Activated naive CD4-positive, alpha-beta T cell treated with anti-CD3 and anti-CD28 coated beads, Interleukin-2, amount 10 ng/mL, durations not matched to agents 7 days and 5 days (primary cell): ENCODE measurements at regions of chr10 and their contacts with region 1.

Region 1: DNA sequence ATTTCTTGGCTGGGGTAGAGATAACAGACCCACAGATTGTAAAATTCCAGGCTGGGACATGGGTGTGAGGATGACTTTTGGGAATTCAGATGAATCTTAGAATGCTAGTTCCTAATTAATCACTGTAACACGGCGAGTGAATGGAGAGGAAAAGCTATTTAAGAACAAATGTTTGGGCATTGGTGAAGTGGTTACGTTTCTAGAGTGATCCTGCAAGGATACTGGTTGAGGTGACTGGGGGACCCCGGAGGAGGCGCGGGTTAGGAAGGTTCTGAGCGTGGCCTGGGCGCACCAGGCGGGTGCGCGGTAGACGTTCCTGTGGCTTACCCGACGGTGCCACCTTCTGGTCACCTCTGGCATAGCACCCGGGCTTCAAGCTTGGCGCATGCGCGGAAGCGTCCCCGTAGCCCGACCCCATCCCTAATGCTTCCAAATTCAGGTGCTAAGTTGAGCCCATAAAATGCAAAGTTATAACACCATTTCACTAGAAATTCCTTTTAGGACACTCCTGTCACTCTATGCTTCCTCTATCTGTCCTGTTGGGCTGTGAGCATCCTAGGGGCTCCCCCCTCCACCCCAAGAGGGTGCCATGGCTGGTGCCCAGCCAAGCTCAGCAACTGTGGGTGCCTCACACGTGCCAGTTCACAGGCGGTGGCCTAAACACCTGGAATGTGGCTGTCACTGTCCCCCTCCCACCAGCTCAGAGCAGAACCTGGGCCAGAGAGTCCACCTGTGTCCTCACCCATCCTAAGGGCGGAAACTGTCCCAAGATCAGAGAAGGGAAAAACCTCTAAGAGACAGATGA is 104.5 kb downstream of the PTPRE start:
- DNase-seq: peak; percentile 88
- H3K4me3 Mint-ChIP-seq: no peak overlapping the region
- H3K27ac Mint-ChIP-seq: peak overlapping the region; percentile 26
- H3K4me1 Mint-ChIP-seq: peaks cover 9% of the 10 kb centered on the region
- H3K27me3 Mint-ChIP-seq: peaks cover 27% of the 10 kb centered on the region

Region 2: DNA sequence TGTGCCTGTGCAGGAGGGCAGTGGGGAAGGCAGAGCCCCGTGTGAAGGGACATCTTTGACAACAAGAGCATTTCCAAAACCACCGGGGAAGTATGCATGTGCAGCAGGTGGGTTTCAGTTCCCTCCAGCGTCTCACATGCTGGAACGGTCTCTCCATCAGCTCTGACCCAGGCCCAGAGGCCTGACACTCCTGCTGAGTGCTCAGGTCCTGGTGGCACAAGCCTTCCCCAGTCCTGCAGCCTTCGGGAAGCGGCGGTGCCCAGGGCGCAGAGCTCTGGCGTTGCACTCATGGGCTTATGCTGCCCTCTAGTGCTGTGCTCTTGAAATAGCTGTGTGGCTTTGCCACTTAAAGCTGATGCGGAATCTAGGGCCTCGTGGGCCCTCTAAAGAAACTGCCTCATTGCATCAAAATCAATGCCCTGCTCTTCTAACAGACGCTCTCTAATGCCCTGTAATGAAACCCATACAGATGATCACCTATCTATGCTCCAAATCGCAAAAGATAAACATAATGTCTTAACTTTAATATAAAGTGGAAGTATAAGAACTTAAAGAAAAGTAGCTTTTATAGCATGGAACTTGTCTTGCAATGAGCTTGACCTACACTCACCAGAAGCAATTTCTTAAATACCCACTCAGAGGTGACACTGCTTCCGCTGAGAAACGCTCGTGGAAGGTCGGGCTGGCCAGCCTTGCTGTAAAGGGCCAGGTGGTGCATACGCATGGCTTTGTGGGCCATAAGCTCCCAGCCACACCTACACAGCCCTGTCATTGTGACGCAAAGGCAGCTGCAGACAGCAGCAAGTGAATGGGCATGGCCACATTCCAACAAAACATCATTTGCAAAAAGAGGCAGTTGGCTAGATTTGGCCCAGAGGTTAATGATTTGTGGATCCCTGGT is 157.3 kb before region 1 on chr10:
- CTCF ChIA-PET with region 1: interaction called, 10 read pairs
- DNase-seq: peak; percentile 59
- H3K4me3 Mint-ChIP-seq: no peak overlapping the region
- H3K27ac Mint-ChIP-seq: no peak overlapping the region
- H3K4me1 Mint-ChIP-seq: no peaks in the 10 kb centered on the region
- H3K27me3 Mint-ChIP-seq: peaks cover 4% of the 10 kb centered on the region

Region 3: DNA sequence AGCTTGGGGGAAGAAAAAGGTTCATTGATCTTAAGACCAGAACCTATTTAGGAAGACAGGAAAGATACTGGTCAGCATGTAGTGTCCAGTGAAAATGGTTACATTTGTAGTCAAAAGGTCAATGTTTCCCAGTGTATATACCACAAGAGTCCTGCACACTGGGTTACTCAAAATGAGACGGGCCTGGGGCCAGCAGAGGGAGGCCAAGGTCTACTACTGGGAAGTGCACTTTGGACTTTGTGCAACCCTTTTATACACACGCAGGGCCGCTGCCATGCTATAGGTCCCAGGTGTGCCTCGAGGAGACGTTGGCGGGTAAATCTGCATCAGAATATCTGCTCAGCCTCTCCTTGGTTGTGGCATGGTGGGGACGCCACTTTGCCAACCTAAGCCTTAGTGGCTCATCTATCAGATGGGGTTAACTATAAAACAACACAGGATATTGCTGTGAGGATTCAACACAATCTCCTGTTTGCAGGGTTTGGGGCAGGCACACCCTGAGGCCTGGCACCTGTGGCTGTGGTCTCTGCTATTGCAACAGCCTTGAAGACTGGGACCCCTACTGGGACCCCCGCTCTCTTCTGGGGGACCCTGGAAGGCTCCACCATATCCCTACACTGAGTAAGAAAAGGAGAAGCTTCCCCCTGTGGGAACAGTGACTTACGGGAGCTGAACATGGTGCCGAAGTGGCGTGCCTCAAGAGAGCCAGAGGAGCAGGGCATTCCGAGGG is 138.3 kb before region 1 on chr10:
- CTCF ChIA-PET with region 1: interaction called, 10 read pairs
- DNase-seq: no peak
- H3K4me3 Mint-ChIP-seq: no peak overlapping the region
- H3K27ac Mint-ChIP-seq: no peak overlapping the region
- H3K4me1 Mint-ChIP-seq: peaks cover 6% of the 10 kb centered on the region
- H3K27me3 Mint-ChIP-seq: peaks cover 27% of the 10 kb centered on the region

Region 4: DNA sequence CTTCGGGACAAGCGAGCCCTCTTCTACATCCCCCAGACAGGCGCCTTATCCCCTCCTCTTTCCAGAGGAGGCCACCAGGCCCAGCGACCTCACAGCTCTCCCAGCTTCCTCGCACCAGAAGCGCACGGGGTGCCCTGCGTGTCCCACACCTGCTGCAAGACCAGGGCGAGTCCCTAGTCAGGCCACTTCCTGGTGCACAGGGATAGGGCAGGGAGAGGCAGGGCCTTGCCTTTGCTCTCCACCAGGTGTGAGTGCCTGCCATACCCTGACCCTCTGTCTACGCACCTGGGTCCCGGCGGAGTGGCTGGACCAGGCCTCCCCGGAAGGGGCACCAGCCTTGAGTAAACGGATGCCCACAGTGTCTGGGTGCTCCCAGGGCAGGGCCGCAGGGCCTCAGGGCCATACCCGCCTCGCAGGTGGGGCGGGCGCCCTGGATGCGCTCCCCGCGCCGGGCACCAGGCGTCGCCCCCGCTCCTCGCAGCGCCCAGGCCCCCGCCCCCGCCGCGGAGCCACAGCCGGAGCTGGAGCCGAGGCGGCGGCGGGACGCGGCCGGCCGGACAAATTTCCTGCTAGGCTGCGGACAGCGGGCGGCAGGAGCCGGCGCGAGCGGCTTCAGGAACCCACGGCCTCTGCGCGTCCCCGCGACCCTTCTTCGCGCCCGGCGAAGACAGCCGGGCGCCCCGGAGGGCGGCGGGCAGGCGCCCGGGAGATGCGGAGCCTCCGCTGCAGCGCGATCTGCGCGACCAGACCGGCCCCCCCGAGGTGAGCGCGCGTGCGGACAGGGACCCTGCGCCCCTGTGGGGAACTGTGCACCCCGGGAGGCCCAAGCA is 104.6 kb before region 1 on chr10 and contains the start of gene PTPRE:
- CTCF ChIA-PET with region 1: interaction called, 145 read pairs
- DNase-seq: peak; percentile 68
- H3K4me3 Mint-ChIP-seq: no peak within 1 kb of the TSS
- H3K27ac Mint-ChIP-seq: no peak within 1 kb of the TSS
- H3K4me1 Mint-ChIP-seq: no peaks in the 10 kb centered on the region
- H3K27me3 Mint-ChIP-seq: peaks cover 64% of the 10 kb centered on the region

Region 5: DNA sequence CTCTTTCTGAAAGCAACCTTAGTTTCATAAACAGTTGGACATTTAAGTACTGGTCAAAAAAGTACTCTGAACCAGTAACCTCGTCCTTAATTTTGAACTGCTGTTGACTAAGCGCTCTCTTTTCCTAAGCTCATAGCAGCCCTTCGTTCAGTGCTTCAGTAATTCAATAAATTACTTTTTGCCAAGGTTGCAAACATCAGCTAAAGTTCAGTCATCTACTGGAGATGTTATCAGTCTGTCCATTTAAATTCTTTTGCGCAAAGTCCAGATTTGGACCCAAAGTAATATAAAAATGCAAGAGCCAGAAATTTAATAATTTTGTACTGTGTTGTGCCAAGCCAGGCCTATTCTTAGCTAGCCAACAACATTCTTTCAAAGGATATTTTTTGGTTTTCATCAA is 96.1 kb before region 1 on chr10:
- CTCF ChIA-PET with region 1: interaction called, 11 read pairs
- DNase-seq: no peak
- H3K4me3 Mint-ChIP-seq: no peak overlapping the region
- H3K27ac Mint-ChIP-seq: no peak overlapping the region
- H3K4me1 Mint-ChIP-seq: no peaks in the 10 kb centered on the region
- H3K27me3 Mint-ChIP-seq: peaks cover 9% of the 10 kb centered on the region

Region 6: GRCh38 chr10:127922675-127923366 is 88.6 kb before region 1 on chr10:
- CTCF ChIA-PET with region 1: interaction called, 11 read pairs
- DNase-seq: no peak
- H3K4me3 Mint-ChIP-seq: no peak overlapping the region
- H3K27ac Mint-ChIP-seq: no peak overlapping the region
- H3K4me1 Mint-ChIP-seq: no peaks in the 10 kb centered on the region
- H3K27me3 Mint-ChIP-seq: peaks cover 11% of the 10 kb centered on the region

Region 7: DNA sequence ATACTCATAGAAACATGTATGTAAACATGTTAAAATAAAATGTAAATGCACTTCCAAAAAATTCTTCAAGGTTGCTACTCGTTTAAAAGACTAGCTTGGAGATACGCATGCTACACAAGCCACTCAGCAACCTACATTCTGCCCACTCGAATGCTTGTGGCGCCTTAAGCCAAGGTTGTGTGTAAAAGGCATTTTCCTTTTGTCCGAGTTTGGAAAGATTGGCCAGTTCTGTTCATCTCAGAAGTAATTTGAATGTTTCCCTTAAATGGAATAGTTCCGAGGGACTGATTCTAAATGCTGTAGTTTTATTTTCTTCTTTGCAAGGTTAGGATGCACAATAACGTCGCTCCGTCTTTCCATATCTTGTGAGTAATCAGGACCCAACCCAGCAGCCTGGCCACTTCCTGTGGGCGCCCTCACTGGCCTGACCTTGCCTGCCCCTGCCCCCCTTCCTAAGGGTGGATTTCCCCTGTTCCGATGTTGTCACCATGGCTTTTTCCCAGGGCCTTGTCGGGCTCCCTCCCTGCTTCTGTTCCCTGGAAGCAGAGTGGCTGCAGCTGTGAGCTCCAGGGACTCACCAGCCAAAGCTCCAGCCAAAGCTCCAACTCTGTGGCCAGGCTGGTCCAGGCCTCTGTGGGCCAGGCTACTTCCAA is 33.9 kb before region 1 on chr10:
- CTCF ChIA-PET with region 1: no interaction called
- DNase-seq: no peak
- H3K4me3 Mint-ChIP-seq: no peak overlapping the region
- H3K27ac Mint-ChIP-seq: no peak overlapping the region
- H3K4me1 Mint-ChIP-seq: peaks cover 6% of the 10 kb centered on the region
- H3K27me3 Mint-ChIP-seq: peaks cover 25% of the 10 kb centered on the region

Region 8: GRCh38 chr10:128069351-128070051 is 58.1 kb after region 1 on chr10:
- CTCF ChIA-PET with region 1: interaction called, 17 read pairs
- DNase-seq: peak; percentile 87
- H3K4me3 Mint-ChIP-seq: no peak overlapping the region
- H3K27ac Mint-ChIP-seq: peak overlapping the region; percentile 45
- H3K4me1 Mint-ChIP-seq: peaks cover 46% of the 10 kb centered on the region
- H3K27me3 Mint-ChIP-seq: no peaks in the 10 kb centered on the region